ENCODE measurements at regions of chr2 and their contacts with region 1.

Region 1: DNA sequence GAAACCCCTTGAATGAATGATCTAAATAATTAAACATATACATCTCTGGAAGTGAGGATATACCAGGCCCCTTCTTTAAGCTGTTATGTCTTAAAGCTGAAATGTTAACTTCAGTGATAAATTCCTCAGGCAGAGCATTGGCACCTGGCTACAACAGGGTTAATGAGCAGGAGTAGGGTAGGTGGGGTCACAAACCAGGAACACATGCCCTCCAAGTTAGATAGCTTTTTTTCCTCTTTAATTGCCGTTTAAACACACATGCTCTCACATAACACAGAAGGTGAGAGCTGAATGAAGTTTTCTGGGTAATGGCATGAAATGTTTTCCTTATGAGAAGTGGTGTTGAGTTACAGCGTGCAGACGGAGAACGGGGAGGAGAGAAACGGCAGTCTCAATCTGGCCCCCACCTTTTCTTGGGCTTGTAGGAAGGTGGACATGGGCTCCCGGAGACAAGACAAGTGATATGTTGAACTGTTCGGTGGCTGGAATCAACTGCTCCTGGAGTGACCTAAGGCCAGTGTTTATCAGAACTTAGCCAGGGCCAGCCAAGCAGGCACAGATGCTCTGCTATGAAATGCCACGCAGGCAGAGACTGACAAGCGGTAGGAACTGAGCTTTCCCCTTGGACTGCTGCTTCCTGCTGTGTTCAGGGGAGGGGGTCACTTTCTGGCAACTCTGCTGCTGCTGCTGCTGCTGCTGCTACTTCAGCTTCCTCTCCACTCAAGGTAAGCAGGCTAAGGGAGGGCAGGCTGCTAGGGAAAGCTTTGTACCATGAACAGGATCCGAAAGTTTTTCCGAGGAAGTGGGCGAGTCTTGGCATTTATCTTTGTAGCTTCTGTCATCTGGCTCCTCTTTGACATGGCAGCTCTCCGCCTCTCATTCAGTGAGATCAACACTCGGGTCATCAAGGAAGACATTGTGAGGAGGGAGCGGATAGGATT is at the start of gene GALNT5:
- DNase-seq: no peak
- total RNA-seq, gene GALNT5: 0.19 TPM

Region 2: DNA sequence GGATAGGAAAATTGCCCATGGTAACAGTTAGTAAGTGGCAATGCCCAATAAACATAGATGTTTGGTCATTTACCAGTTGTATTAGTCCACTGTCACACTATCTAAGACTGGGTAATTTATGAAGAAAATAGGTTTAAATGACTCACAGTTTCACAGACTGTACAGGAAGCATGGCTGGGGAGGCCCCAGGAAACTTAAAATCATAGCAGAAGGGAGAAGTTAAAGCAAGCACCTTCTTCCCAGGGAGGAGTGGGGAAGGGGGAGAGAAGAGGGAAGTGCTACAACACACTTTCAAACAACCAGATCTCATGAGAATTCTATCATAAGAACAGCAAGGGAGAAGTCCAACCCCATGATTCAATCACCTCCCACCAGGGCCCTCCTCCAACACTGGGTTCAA is 948.4 kb before region 1 on chr2:
- intact Hi-C with region 1: loop called in 1 of 2 experiments (anchors 10 kb)
- DNase-seq: no peak

Measured in posterior vena cava (tissue), 2 donors.